Mammary epithelial cell (primary cell): ENCODE measurements at regions of chr1 and their contacts with region 1.

Region 1: DNA sequence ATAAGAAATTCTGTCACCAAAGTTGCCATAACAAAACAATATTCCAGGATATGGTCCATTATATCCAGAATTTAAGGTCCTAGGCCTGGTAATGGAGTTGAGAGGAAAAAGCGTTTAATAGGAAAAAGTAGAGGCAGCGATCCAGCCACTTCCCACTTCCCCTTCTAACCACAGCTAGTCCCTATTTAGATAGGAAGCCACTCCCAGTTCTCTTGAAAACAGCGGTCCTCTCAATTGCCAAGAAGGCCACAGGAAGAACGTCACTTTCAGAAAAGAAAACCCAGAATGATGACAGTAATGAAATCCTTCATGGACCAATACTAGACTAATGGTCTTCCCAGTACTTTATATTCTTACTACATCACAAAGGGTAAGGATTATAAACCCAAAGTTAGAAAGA is 38.6 kb downstream of the ABL2 start:
- DNase-seq: no peak
- H3K4me3 ChIP-seq: no peak overlapping the region
- H3K27ac ChIP-seq: no peak overlapping the region
- H3K4me1 ChIP-seq: no peaks in the 10 kb centered on the region
- H3K27me3 ChIP-seq: no peaks in the 10 kb centered on the region
- CTCF ChIP-seq: no peak

Region 2: GRCh38 chr1:179025125-179025974 is 165.5 kb before region 1 on chr1 and contains the start of gene FAM20B:
- CTCF ChIA-PET with region 1: no interaction called
- dilution Hi-C with region 1: no loop called
- in situ Hi-C with region 1: no loop called
- intact Hi-C with region 1: loop called (anchors 10 kb)
- DNase-seq: peak; percentile 89
- H3K4me3 ChIP-seq: peak within 1 kb of the TSS; percentile 67 to 94 (median 71)
- H3K27ac ChIP-seq: peak within 1 kb of the TSS; percentile 77
- H3K4me1 ChIP-seq: no peaks in the 10 kb centered on the region
- H3K27me3 ChIP-seq: no peaks in the 10 kb centered on the region
- CTCF ChIP-seq: no peak
- total RNA-seq, gene FAM20B: 36.8 to 44.3 TPM

Region 3: DNA sequence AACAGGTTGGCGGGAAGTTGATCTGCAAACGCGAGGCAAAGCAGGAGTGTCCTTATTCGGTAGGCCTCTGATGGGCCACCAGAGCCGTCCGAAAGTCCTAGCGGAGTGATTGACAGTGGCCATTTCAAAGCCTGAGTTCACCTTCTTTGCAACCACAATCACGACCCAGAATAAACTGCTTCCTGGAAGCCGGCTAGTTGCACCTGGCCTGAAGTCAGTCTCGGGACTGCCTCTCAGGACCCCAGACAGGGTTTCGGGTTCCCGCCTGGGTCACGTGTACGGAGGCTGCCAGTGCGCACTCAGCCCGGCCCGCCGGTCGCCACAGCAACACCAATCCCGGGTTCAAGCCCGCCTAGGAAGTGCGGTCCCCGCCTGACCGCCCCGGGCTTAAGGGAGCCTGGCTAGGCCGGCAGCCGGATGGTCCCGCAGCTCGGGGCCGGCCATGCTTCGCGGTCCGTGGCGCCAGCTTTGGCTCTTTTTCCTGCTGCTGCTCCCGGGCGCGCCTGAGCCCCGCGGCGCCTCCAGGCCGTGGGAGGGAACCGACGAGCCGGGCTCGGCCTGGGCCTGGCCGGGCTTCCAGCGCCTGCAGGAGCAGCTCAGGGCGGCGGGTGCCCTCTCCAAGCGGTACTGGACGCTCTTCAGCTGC is 109.1 kb before region 1 on chr1 and contains the start of gene TOR3A:
- CTCF ChIA-PET with region 1: no interaction called
- dilution Hi-C with region 1: no loop called
- in situ Hi-C with region 1: no loop called
- intact Hi-C with region 1: loop called (anchors 1 kb)
- DNase-seq: peak; percentile 89
- H3K4me3 ChIP-seq: peak within 1 kb of the TSS; percentile 56 to 91 (median 84)
- H3K27ac ChIP-seq: peak within 1 kb of the TSS; percentile 50
- H3K4me1 ChIP-seq: peaks cover 5% of the 10 kb centered on the region
- H3K27me3 ChIP-seq: no peaks in the 10 kb centered on the region
- CTCF ChIP-seq: no peak
- total RNA-seq, gene TOR3A: 33.5 to 38.0 TPM

Region 4: GRCh38 chr1:179121159-179121938 is 69.5 kb before region 1 on chr1:
- CTCF ChIA-PET with region 1: no interaction called
- dilution Hi-C with region 1: no loop called
- in situ Hi-C with region 1: no loop called
- intact Hi-C with region 1: loop called (anchors 1 kb)
- DNase-seq: no peak
- H3K4me3 ChIP-seq: no peak overlapping the region
- H3K27ac ChIP-seq: no peak overlapping the region
- H3K4me1 ChIP-seq: peaks cover 21% of the 10 kb centered on the region
- H3K27me3 ChIP-seq: no peaks in the 10 kb centered on the region
- CTCF ChIP-seq: peak; percentile 55 to 64

Region 5: DNA sequence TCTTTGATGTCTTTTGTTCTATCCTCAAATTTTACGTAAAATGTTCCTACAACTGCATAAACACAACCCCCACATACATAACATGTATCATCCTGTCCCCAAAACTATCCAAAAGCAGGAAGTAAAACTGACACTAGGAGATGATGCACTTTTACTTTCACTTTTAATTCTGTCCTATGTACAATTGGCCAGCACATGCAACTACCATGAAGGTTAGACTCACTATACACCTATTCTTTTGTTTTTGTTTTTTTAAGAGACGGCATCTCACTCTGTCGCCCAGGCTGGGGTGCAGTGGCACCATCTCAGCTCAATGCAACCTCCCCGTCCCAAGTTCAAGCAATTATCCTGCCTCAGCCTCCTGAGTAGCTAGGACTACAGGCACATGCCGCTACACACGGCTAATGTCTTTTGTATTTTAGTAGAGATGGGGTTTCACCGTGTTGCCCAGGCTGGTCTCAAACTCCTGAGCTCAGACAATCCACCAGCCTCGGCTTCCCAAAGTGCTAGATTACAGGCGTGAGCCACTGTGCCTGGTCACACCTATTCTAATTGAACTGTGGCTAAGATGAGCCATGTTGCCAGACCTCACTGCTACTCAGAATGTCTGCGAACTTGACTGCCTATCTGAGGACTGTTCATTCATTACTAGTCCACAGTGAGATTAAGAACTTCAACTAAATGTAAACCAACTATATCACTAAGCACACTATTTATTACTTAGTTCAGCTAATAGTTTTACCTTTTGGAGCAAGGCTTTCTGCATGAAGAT is 61.0 kb before region 1 on chr1:
- CTCF ChIA-PET with region 1: interaction called, 12 read pairs
- dilution Hi-C with region 1: no loop called
- in situ Hi-C with region 1: no loop called
- intact Hi-C with region 1: no loop called
- DNase-seq: peak; percentile 42
- H3K4me3 ChIP-seq: no peak overlapping the region
- H3K27ac ChIP-seq: peak overlapping the region; percentile 11
- H3K4me1 ChIP-seq: peaks cover 39% of the 10 kb centered on the region
- H3K27me3 ChIP-seq: no peaks in the 10 kb centered on the region
- CTCF ChIP-seq: no peak

Region 6: DNA sequence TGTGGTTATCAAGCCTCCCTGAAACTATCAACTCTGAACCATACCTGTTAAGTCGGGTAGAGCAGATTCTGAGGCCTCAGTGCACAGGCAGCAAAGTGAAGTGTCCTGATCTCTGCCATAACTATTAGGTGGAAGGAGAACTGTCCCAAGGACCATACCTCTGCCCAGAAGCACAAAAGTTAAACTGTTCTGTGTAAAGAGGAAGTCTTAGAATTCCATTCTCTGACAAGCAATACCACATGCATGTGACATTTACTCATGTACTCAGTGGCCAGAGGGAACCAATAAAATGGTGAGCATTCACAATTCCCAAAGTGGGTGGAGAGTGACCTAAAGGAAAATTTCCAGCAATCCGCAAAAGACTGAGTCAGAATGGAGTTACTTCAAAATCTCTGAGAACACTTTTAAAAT is 48.0 kb before region 1 on chr1:
- CTCF ChIA-PET with region 1: no interaction called
- dilution Hi-C with region 1: no loop called
- in situ Hi-C with region 1: no loop called
- intact Hi-C with region 1: loop called (anchors 2 kb)
- DNase-seq: peak; percentile 97
- H3K4me3 ChIP-seq: peak overlapping the region; percentile 68 to 100 (median 82)
- H3K27ac ChIP-seq: peak overlapping the region; percentile 100
- H3K4me1 ChIP-seq: peaks cover 30% of the 10 kb centered on the region
- H3K27me3 ChIP-seq: no peaks in the 10 kb centered on the region
- CTCF ChIP-seq: no peak